WTC11 (cell line): ENCODE measurements at regions of chr1 and their contacts with region 1.

Region 1: DNA sequence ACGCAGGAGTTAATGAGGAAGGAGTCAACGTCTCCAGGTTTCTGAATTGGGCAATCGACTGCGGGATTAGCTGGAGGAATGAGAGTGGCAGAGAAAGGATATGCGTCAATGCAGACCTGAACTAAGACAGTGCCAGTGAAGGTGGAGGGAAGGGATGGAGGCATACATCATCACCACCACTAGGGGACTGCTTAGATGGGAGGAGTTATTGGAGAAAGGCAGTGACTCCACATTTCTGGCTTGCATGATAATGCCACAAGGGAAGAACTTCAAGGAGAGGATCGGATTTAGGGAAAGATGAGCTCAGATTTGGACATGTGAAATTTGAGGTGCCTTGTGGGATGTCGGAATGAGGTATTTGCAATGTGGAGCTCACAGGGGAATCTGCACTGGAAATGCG is 17.5 kb downstream of the VASH2 start:
- DNase-seq: peak; percentile 47
- ATAC-seq: peak; percentile 86
- H3K4me3 Mint-ChIP-seq: peak overlapping the region; percentile 1; the same call in 1 of the 2 replicates
- H3K27ac Mint-ChIP-seq: peak overlapping the region; percentile 78
- H3K4me1 Mint-ChIP-seq: peaks cover 82% of the 10 kb centered on the region
- H3K27me3 Mint-ChIP-seq: no peaks in the 10 kb centered on the region
- CTCF ChIP-seq: no peak

Region 2: DNA sequence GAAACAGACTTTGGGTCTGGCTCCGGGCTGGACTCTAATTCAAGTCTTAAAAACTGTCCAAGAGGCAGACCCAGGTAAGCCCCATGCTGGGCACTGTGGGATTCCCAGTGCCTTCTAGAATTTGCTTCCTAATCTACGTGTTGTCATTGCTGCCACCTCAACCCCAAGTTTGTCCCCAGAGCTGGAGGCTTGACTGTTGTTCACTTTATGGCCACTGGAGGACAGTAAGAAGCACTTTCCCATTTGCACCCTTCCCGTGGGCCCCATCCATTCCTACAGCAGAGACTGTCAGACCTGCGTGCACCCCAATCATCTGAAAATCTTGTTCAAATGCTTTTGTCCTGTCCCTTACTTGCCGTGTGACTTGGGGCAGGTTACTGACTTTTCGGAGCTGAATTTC is 46.9 kb before region 1 on chr1:
- CTCF ChIA-PET with region 1: interaction called, 16 read pairs
- POLR2A ChIA-PET with region 1: interaction called, 3 read pairs
- DNase-seq: peak; percentile 20
- ATAC-seq: no peak
- H3K4me3 Mint-ChIP-seq: no peak overlapping the region
- H3K27ac Mint-ChIP-seq: no peak overlapping the region
- H3K4me1 Mint-ChIP-seq: peaks cover 76% of the 10 kb centered on the region
- H3K27me3 Mint-ChIP-seq: peaks cover 9% of the 10 kb centered on the region
- CTCF ChIP-seq: peak; percentile 37; the same call in 1 of the 2 replicates

Region 3: DNA sequence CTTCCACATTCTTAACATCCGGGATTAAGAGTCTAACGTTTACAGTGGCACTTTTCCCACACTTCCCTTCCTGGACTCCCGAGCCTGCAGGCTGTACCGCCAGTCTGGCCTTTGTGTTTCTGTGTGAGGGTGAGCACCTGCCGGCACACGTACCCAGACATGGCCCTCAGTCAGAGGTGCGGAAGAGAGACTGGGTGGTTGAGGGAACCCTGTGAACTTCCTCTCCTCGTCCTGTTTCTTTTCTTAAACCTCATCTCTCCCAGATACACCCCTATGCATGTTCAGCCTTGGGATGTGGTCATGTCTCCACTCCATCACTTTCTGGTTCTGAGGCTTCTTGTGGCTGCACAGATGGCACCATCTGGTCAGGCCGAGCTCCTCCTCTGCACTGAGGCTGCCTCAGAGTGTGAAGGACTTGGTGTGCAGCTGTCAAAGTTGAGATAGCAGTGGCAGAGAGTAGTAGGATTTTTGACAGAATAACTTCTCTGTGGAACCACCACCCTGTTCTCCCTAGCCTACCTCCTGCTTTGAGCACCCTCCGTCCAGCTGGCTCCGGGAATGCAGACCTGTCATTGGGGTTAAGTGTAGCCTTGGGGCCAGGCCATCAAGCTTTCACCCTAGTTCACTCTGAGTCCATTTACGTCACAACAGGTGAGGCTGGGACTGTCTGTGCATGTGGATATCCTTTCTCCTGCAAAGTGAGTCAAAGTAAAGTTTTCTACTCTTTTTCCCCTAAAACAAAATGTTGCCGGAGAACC is 13.9 kb after region 1 on chr1:
- CTCF ChIA-PET with region 1: interaction called, 24 read pairs
- POLR2A ChIA-PET with region 1: interaction called, 3 read pairs
- DNase-seq: no peak
- ATAC-seq: peak; percentile 6
- H3K4me3 Mint-ChIP-seq: no peak overlapping the region
- H3K27ac Mint-ChIP-seq: peak overlapping the region; percentile 88
- H3K4me1 Mint-ChIP-seq: peaks cover 87% of the 10 kb centered on the region
- H3K27me3 Mint-ChIP-seq: no peaks in the 10 kb centered on the region
- CTCF ChIP-seq: no peak